ENCODE measurements at regions of chr2 and their contacts with region 1.

Region 1: GRCh38 chr2:71530641-71531332 is 77.4 kb downstream of the DYSF start:
- H3K4me3 ChIP-seq: no peak overlapping the region
- H3K27ac ChIP-seq: no peak overlapping the region
- H3K4me1 ChIP-seq: no peaks in the 10 kb centered on the region
- CTCF ChIP-seq: no peak; the same call in 1 of the 2 replicates

Region 2: DNA sequence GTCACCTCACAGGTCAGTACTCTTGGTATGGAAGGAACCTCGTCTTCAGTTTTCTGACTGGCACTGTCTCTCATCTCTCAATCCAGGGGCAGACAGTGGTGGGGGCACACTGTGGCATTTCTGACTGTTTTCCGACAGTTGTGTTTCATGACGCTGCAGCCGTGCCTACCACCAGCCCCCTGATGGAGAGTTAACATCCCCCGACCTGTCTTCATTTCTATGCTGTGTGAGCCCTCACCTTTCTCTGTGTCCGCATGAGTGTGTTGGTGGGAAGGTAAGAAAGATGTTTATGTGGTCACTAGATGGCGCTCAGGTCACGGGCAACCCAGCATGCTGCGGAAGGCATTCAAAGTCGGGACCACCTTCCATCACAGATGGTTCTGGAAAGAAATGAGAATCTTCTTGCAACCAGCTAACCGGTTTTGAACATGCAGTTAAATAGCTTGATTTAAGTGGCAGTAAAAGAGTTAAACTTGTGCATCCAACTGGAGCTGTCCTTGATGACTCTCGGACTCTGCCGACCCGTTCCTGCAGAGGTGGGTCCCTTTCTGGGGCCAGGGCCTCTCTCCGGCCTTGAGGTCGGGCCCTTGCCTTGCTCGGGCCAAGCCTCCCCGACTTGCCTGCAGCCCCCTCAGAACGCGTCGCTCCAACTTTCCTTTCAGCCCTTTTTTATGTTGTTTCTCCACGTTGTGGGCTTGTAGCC is 14.9 kb after region 1 on chr2:
- CTCF ChIA-PET with region 1: interaction called, 11 read pairs
- POLR2A ChIA-PET with region 1: no interaction called
- H3K4me3 ChIP-seq: no peak overlapping the region
- H3K27ac ChIP-seq: no peak overlapping the region
- H3K4me1 ChIP-seq: no peaks in the 10 kb centered on the region
- CTCF ChIP-seq: peak; percentile 78

Region 3: DNA sequence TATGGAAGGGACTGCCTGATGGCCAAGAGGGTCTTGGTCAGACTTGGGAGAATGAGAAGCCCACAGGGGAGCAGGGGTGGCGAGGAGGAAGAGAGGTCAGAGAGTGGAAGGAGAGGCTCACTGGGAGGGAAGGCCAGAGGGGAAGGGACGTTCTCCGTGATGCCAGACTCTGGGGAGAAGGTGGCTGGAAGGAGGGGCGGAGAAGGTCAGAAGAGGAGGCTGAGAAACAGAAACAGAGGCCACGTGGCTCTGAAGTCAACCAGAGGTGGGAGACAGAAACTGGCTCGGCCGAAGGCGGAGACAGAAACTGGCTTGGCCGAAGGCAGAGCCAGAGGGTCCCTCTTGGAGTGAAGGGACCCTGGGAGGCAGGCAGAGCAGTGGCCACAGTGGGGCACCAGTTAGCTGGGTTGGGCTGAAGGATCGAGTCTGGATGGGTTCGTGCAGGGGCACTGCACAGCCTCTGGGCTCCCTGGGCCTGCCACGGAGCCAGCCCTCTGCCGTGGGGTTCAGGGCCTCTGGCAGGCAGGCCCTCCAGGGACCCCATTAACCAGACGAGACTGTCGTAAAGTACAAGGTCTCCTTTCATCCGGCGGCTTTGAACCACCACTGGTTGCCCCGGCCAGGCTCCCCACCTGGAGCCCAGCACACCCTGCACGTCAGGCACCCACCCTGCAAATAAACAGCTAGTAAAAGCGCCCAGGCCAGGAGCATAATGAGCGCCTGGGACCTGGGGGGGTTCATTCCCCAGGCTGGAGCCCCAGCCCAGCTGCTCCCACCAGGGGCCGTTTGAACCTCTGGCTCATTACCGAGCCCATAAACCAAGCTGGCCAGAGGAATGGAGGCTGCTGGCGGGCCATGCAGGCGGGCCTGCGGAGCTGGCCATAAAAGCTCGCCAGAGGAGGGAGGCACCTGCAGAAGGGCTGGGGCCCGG is 141.4 kb after region 1 on chr2:
- CTCF ChIA-PET with region 1: no interaction called
- POLR2A ChIA-PET with region 1: no interaction called
- H3K4me3 ChIP-seq: no peak overlapping the region
- H3K27ac ChIP-seq: no peak overlapping the region
- H3K4me1 ChIP-seq: no peaks in the 10 kb centered on the region
- CTCF ChIP-seq: no peak

Measured in HEK293 (cell line).